ENCODE measurements at regions of chr1 and their contacts with region 1.

Region 1: DNA sequence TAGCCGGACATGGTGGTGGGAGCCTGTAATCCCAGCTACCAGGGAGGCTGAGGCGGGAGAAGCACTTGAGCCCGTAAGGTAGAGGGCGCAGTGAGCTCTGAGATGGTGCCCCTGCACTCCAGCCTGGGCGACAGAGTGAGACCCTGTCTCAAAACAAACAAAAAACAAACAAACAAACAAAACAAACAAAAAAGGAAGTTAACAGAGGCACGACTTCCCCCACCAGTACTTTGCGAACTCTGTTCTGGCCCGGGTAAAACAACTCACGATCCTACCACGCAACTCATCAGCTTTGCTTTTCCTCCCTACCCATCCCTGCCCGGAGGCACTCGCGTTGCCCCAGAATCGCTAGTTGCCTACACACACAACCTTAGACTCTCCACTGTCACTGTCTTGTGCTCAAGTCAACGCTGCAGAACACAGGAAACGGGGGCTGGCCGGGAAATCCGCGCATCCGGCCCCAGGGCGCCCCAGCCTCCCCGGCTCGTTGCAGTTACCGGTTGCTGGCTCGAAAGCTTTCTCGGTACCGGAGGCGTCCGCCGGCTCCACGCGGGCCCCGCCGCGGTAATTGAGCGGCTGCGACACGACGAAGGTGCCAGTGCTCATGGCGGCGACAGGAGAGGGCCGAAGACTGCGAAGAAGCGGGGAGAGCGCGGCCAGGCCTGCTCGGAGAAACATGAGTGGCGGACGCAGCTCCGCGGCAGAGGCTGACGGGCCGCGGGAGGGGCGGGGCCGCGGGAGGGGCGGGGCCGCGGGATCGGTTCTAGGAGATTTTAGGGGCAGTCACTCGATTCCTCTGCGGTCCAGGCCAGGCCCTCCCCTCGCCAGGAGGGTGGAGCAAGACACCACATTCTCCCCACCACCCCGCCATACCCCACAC is at the start of gene ALDH9A1:
- DNase-seq: peak; percentile 86
- ATAC-seq: peak; percentile 97 to 98
- H3K4me3 ChIP-seq: peak within 1 kb of the TSS; percentile 93
- H3K27ac ChIP-seq: peak within 1 kb of the TSS; percentile 93 to 99
- H3K4me1 ChIP-seq: peaks cover 15% of the 10 kb centered on the region
- CTCF ChIP-seq: peak; percentile 58
- EP300 ChIP-seq: no peak
- POLR2A ChIP-seq: peak; percentile 92
- RAD21 ChIP-seq: peak in 1 of 2 experiments; percentile 25; a peak in 1 of 5 replicates
- polyA plus RNA-seq, gene ALDH9A1: 49.6 and 77.1 TPM in 2 replicates

Region 2: GRCh38 chr1:165707984-165708706 is 10.0 kb after region 1 on chr1:
- CTCF ChIA-PET with region 1: interaction called, 10 read pairs
- POLR2A ChIA-PET with region 1: interaction called, 3 read pairs
- DNase-seq: no peak
- ATAC-seq: peak; percentile 33 to 50; a peak in 5 of 6 replicates
- H3K4me3 ChIP-seq: no peak overlapping the region
- H3K27ac ChIP-seq: no peak overlapping the region
- H3K4me1 ChIP-seq: peaks cover 4% of the 10 kb centered on the region; the same call in 2 of the 3 replicates
- CTCF ChIP-seq: no peak
- EP300 ChIP-seq: no peak
- POLR2A ChIP-seq: no peak
- RAD21 ChIP-seq: no peak